MCF 10A (cell line): ENCODE measurements at regions of chr1 and their contacts with region 1.

Region 1: GRCh38 chr1:157163273-157164127 is 25.3 kb upstream of the ETV3 start:
- DNase-seq: peak; percentile 79
- H3K4me3 Mint-ChIP-seq: no peak overlapping the region
- H3K27ac Mint-ChIP-seq: no peak overlapping the region
- H3K4me1 Mint-ChIP-seq: peaks cover 7% of the 10 kb centered on the region
- H3K27me3 Mint-ChIP-seq: peaks cover 24% of the 10 kb centered on the region
- CTCF ChIP-seq: peak; percentile 97

Region 2: DNA sequence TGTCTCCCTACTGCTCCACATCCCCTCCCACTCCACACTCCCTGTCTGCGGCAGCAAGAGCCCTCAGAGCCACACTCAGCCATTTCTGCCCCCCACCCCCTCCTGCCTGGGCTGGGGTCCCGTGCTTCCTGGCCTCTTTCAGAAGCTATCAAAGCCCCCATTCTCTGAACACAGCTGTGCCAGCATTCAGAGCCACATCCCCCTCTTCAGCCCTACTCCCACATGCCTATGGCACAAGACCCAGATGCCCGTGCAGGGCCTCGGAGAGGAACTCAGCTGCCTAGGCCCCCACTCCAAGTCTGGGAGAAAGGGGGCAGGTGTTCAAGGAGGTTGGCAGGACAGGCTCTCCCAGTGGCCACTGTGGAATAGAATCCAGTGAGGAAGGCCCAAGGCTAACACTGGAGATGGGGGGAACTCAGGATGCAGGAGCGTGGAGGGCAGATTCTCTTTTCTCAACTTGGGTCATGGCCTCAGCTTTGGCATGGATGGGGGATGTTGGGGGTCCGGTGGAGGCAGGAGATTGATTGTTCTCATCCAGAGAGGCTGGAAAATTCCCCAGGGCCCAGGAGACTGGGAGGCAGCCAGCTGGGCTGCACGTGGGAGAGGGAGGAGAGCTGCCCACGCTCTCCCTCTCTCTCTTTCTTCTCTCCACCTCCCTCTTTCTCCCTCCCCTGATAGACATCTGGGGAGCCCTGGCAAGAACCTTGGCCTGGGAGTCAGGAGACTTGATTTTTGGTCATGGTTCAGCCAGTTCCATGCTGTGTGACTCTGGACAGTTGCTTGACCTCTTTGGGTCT is 525.1 kb before region 1 on chr1:
- CTCF ChIA-PET with region 1: no interaction called
- POLR2A ChIA-PET with region 1: no interaction called
- intact Hi-C with region 1: no loop called
- DNase-seq: no peak
- H3K4me3 Mint-ChIP-seq: no peak overlapping the region
- H3K27ac Mint-ChIP-seq: no peak overlapping the region
- H3K4me1 Mint-ChIP-seq: peaks cover 15% of the 10 kb centered on the region
- H3K27me3 Mint-ChIP-seq: peaks cover 69% of the 10 kb centered on the region
- CTCF ChIP-seq: no peak

Region 3: DNA sequence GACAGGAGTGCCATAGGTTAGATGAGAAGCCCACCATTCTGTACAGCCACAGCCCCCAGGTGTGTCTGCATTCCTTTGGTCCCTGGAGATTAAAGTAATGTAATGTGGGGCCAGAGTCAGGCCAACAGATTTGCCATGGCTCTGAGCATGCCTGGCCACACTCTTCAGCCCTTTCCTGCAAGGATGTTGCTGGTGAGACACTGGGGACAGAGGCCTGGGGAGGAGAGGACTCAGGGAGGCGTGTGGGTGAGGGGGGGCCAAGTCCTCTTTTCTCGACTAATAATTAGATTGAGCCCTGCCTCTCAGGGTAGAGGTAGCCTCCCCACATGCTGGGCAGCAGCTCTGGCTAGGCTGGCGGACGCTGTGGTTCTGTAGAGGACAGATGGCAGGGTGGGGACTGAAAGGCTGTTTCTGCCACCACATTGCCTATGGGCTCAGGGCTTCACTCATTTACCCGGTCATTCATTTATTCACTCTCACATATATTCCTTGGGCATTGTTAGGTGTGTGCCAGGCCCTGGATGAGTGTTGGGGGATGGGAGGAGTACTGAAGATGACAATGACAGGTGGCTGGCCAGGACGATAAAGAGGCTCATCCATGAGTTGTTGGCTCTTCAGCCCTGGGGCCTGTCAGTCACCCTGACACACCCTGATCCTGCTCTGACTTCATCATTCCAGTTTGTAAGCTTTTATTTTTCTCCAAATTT is 403.2 kb before region 1 on chr1:
- CTCF ChIA-PET with region 1: no interaction called
- POLR2A ChIA-PET with region 1: no interaction called
- intact Hi-C with region 1: no loop called
- DNase-seq: no peak
- H3K4me3 Mint-ChIP-seq: no peak overlapping the region
- H3K27ac Mint-ChIP-seq: no peak overlapping the region
- H3K4me1 Mint-ChIP-seq: no peaks in the 10 kb centered on the region
- H3K27me3 Mint-ChIP-seq: no peaks in the 10 kb centered on the region
- CTCF ChIP-seq: no peak

Region 4: DNA sequence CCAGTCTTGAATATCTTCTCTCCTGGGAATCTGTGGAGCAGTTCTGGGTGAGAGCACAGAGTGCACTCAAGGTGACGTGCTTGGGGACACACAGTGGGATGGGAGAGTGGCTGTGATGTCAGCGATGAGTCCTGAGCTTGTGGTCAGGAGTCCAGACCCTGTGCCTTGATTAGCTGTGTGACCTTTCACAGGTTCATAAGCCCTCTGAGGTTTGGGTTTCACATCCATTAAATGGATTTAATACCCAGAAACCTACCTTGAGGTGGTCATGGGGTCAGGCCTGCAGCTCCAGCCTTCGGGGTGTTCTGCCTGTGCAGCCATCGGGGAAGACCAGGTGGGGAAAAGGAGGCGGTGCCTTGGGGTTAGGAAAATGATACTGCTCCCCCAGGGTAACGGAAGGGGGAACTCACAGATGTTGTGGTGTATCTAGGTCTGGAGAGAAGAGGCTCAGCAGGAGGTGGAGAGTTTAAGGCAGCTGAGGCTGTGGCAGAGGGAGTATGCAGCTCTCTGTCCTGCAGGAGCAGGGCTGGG is 13.2 kb after region 1 on chr1:
- CTCF ChIA-PET with region 1: interaction called, 10 read pairs
- POLR2A ChIA-PET with region 1: no interaction called
- intact Hi-C with region 1: no loop called
- DNase-seq: no peak
- H3K4me3 Mint-ChIP-seq: no peak overlapping the region
- H3K27ac Mint-ChIP-seq: no peak overlapping the region
- H3K4me1 Mint-ChIP-seq: no peaks in the 10 kb centered on the region
- H3K27me3 Mint-ChIP-seq: peaks cover 89% of the 10 kb centered on the region
- CTCF ChIP-seq: no peak